Left colon (tissue), 2 donors: ENCODE measurements at regions of chr2 and their contacts with region 1.

Region 1: DNA sequence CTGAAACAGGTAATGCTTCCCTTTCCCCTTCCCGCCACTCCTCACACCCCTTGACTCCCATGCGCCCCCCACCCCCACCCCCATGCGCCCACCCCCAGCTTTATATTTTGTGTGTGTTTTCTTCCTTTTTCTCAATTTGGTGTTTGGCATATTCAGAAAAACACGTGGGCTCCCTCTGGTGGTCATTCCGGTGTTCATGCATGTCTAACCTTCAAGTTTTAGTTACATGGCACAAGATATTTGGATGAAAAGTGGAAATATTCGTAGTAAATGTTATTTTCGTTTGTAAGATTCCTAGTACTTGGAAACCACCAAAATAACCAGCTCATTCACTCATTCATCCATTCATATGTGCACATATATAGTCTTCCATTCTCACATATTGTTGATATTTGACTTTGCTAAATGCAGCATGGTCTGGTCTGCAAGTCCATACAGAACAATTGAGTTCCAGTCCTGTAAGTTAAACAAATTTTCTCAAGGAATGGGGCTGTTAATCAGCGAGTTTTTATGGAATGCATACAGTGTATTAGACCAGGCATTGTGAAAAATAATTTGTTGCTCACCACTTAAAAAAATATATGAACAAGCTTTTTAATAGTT is 143.6 kb upstream of the MAP3K20 start:
- DNase-seq: peak in 1 of 2 donors; percentile 78
- ATAC-seq: peak; percentile 55

Region 2: GRCh38 chr2:172806493-172806892 is 125.5 kb before region 1 on chr2:
- intact Hi-C with region 1: loop called (anchors 5 to 10 kb)
- DNase-seq: no peak
- ATAC-seq: peak; percentile 74

Region 3: GRCh38 chr2:172864182-172864581 is 67.8 kb before region 1 on chr2:
- intact Hi-C with region 1: loop called in 1 of 2 experiments (anchors 10 kb)
- DNase-seq: peak in 1 of 2 donors; percentile 64
- ATAC-seq: peak; percentile 64

Region 4: DNA sequence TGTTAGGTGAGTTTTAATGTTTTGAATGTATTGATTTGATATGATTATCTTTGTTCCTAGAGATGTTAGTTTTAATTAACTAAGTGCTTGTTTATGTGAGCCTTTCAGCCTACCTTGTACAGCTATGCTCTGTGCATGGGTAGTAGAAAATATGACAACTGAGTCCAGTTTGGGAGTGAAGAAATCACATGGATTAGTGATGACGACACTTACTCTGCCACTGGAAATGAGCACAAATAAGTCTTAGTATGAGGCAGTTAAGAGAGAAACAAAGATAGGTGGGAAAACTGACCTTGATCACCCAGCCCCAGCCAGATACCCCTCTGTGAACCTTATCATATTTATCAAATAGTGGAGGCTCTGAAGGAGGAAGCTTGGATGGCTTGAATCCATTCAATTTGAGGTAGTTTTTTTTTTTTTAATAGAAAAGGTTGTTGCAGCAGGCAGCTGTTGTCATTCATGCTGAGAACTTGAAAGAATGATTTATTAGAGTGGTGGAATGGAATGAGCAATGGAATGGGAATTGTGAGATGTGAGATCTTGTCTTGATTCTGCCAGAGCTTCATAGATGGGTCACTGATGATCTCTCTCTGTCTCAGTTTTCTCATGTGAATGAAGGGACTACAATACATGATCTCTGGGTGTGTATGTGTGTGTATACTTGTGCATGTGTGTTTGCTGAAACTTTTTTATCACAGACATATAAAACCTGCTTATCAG is 240.1 kb after region 1 on chr2:
- intact Hi-C with region 1: no loop called
- DNase-seq: no peak
- ATAC-seq: no peak